ENCODE measurements at regions of chr1 and their contacts with region 1.

Region 1: GRCh38 chr1:230066466-230067404 is at the start of gene GALNT2:
- DNase-seq: peak; percentile 93
- H3K4me3 ChIP-seq: peak within 1 kb of the TSS; percentile 62 to 94 (median 87)
- H3K27ac ChIP-seq: peak within 1 kb of the TSS; percentile 92 to 98 (median 94)
- H3K4me1 ChIP-seq: peaks cover 0 to 32% (median 27%) of the 10 kb centered on the region in 4 donors
- H3K27me3 ChIP-seq: no peaks in the 10 kb centered on the region
- CTCF ChIP-seq: no peak
- EP300 ChIP-seq: no peak
- POLR2A ChIP-seq: no peak
- total RNA-seq, gene GALNT2: 32.6 to 38.5 (median 37.8) TPM

Region 2: GRCh38 chr1:229643996-229644745 is 422.6 kb before region 1 on chr1:
- intact Hi-C with region 1: no loop called
- DNase-seq: no peak
- H3K4me3 ChIP-seq: no peak overlapping the region
- H3K27ac ChIP-seq: no peak overlapping the region
- H3K4me1 ChIP-seq: peaks cover 0 to 4% (median 0%) of the 10 kb centered on the region in 4 donors
- H3K27me3 ChIP-seq: no peaks in the 10 kb centered on the region
- CTCF ChIP-seq: no peak
- EP300 ChIP-seq: no peak
- POLR2A ChIP-seq: no peak

Region 3: DNA sequence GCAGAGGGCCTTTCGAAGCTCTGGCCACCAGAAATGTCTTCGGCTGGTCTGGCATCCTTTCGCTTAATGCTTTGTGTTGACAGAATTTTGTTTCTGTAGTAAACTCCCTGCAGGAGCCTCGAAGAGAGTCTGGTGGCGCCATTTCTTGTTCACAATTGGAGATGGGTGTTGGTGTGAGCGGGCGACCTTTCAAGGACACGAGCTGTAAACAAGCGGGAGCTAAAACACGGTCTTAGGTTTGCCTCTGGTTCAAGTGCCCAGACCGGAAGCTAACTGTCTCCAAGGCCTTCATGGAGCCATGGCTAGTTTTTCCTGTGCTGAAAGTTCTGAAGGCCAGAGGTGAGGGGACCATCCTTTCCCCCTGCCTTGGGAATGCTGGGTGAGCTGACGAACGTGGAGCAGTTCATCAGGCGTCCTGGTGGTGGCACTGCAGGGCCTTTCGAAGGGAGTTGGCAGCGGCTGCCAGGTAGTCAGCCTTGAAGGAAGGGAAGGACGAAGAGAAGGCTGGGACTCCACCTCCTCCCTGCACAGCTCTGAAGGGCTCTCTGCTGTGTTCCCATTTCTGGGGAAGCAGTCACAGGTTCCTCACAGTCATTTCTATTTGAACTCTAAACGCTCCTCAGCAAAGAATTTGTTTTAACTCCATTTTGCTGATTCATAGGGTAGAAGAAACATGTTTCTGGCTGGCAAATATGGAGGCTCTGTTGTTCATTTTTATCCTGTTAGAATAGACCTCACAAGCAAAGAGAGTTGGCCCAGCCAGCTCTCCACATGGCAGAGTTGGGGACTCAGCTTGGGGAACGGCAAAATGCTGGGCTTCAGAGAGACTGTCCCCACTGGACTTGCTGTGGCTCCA is 405.5 kb before region 1 on chr1:
- intact Hi-C with region 1: loop called (anchors 5 kb)
- DNase-seq: peak; percentile 93
- H3K4me3 ChIP-seq: no peak overlapping the region
- H3K27ac ChIP-seq: no peak overlapping the region
- H3K4me1 ChIP-seq: peaks cover 0 to 7% (median 0%) of the 10 kb centered on the region in 4 donors
- H3K27me3 ChIP-seq: no peaks in the 10 kb centered on the region
- CTCF ChIP-seq: peak; percentile 81 to 94 (median 89)
- EP300 ChIP-seq: no peak
- POLR2A ChIP-seq: no peak

Region 4: GRCh38 chr1:230104395-230105244 is 37.9 kb after region 1 on chr1:
- intact Hi-C with region 1: loop called (anchors 2 kb)
- DNase-seq: peak; percentile 98
- H3K4me3 ChIP-seq: peak overlapping the region in 3 of 4 donors; percentile 2 to 4 (median 2)
- H3K27ac ChIP-seq: peak overlapping the region; percentile 58 to 88 (median 68)
- H3K4me1 ChIP-seq: peaks cover 0 to 69% (median 61%) of the 10 kb centered on the region in 4 donors
- H3K27me3 ChIP-seq: no peaks in the 10 kb centered on the region
- CTCF ChIP-seq: no peak
- EP300 ChIP-seq: peak in 1 of 4 donors; percentile 82
- POLR2A ChIP-seq: no peak

Region 5: GRCh38 chr1:230186003-230186863 is 119.5 kb after region 1 on chr1:
- intact Hi-C with region 1: loop called (anchors 5 kb)
- DNase-seq: peak; percentile 85
- H3K4me3 ChIP-seq: peak overlapping the region in 1 of 4 donors; percentile 22
- H3K27ac ChIP-seq: peak overlapping the region; percentile 42 to 79 (median 56)
- H3K4me1 ChIP-seq: peaks cover 0 to 38% (median 36%) of the 10 kb centered on the region in 4 donors
- H3K27me3 ChIP-seq: no peaks in the 10 kb centered on the region
- CTCF ChIP-seq: no peak
- EP300 ChIP-seq: no peak
- POLR2A ChIP-seq: peak in 1 of 2 donors; percentile 17

Region 6: GRCh38 chr1:230215031-230215430 is 148.3 kb after region 1 on chr1:
- intact Hi-C with region 1: loop called (anchors 5 kb)
- DNase-seq: peak; percentile 87
- H3K4me3 ChIP-seq: no peak overlapping the region
- H3K27ac ChIP-seq: peak overlapping the region; percentile 12 to 38 (median 34)
- H3K4me1 ChIP-seq: peaks cover 0 to 16% (median 11%) of the 10 kb centered on the region in 4 donors
- H3K27me3 ChIP-seq: no peaks in the 10 kb centered on the region
- CTCF ChIP-seq: peak; percentile 23 to 52 (median 40)
- EP300 ChIP-seq: no peak
- POLR2A ChIP-seq: no peak

Region 7: GRCh38 chr1:230251644-230252191 is 185.0 kb after region 1 on chr1:
- intact Hi-C with region 1: no loop called
- DNase-seq: no peak
- H3K4me3 ChIP-seq: no peak overlapping the region
- H3K27ac ChIP-seq: no peak overlapping the region
- H3K4me1 ChIP-seq: no peaks in the 10 kb centered on the region
- H3K27me3 ChIP-seq: no peaks in the 10 kb centered on the region
- CTCF ChIP-seq: no peak
- EP300 ChIP-seq: no peak
- POLR2A ChIP-seq: no peak

Region 8: DNA sequence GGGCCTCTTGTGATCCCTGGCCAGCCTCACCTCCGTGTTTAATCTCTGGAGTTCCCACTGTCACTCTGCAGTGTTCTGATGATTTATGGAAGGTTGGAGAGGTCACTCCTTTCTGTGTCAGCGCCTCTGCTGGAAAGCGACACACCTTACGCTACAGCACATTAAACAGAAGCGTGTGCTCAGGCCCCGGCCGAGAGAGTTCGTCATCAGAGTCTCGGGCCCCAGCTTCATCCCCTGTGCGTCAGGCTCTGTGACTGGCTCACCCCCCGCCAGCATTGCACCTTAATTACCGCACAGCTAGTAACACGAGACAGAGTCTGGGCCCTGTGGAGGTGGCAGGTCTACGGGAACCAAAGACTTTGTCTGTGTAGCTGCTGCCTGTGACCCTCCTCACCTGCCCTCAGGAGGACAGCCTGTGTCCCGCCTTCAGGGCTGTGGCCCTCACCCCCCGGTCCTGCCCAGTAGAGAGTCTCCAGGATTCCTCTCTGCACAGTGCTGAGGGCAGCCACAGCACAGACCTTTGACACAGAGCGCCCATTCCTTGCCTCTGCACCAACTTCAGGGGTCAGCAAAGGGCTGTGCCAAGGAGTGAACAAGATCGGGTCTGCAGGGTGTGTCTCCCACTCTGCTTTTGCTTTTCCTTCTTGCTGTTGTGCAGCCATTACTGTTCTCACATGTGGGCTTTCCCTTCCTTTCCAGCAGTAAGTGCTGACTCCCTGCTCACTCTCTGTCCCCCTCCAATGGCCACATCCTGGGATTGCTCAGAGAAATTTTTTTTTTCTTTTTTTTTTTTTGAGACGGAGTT is 201.8 kb after region 1 on chr1:
- intact Hi-C with region 1: loop called (anchors 2 kb)
- DNase-seq: no peak
- H3K4me3 ChIP-seq: no peak overlapping the region
- H3K27ac ChIP-seq: no peak overlapping the region
- H3K4me1 ChIP-seq: peaks cover 0 to 23% (median 14%) of the 10 kb centered on the region in 4 donors
- H3K27me3 ChIP-seq: no peaks in the 10 kb centered on the region
- CTCF ChIP-seq: peak; percentile 22 to 55 (median 47)
- EP300 ChIP-seq: no peak
- POLR2A ChIP-seq: no peak

Region 9: GRCh38 chr1:230310381-230311163 is 243.8 kb after region 1 on chr1:
- intact Hi-C with region 1: loop called (anchors 5 kb)
- DNase-seq: peak; percentile 89
- H3K4me3 ChIP-seq: no peak overlapping the region
- H3K27ac ChIP-seq: no peak overlapping the region
- H3K4me1 ChIP-seq: peaks cover 0 to 2% (median 0%) of the 10 kb centered on the region in 4 donors
- H3K27me3 ChIP-seq: no peaks in the 10 kb centered on the region
- CTCF ChIP-seq: peak; percentile 74 to 93 (median 86)
- EP300 ChIP-seq: no peak
- POLR2A ChIP-seq: no peak